Activated CD4-positive, alpha-beta memory T cell treated with anti-CD3 and anti-CD28 coated beads, Interleukin-2, amount 10 ng/mL, durations not matched to agents 7 days and 5 days (primary cell): ENCODE measurements at regions of chr9 and their contacts with region 1.

Region 1: DNA sequence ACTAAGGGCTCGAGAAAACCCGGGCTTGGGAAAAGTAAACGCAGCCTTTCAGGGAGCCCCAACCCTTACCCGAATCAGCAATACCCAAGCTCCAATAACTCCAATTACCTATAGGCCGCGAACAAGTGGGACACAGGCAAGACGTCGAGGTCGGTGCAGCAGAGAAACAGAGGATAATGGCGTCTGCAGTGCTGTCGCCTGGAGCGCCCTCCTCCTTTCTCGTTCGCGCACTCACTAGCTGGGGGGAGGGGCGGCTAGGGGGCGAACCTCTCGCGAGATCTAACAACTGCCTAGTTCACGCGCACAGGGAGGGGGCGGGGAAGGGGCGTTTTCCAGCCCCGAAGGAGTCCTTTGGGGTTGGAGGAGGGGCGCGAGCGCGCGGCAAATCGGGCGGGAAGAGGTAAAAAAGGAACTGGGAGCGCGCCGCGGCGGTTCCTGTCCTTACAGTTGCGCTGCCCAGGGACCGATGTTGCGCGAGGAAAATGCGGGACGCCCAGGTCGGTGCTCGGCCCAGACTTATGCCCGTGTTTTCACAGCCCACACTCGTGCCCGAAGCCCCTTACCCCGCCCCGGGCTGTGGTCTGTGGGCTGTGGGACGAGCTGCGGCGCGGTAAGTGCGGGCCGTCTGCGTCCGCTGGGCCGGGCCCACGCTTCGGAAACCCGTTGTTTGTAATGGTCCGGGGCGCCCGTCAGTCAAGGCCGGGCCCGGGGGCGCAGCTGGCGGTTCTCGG is at the start of gene RMI1:
- DNase-seq: peak; percentile 99
- H3K4me3 Mint-ChIP-seq: peak within 1 kb of the TSS; percentile 97
- H3K27ac Mint-ChIP-seq: peak within 1 kb of the TSS; percentile 96
- H3K4me1 Mint-ChIP-seq: peaks cover 51% of the 10 kb centered on the region
- H3K27me3 Mint-ChIP-seq: no peaks in the 10 kb centered on the region
- total RNA-seq, gene RMI1: 22.1 to 22.4 TPM

Region 2: DNA sequence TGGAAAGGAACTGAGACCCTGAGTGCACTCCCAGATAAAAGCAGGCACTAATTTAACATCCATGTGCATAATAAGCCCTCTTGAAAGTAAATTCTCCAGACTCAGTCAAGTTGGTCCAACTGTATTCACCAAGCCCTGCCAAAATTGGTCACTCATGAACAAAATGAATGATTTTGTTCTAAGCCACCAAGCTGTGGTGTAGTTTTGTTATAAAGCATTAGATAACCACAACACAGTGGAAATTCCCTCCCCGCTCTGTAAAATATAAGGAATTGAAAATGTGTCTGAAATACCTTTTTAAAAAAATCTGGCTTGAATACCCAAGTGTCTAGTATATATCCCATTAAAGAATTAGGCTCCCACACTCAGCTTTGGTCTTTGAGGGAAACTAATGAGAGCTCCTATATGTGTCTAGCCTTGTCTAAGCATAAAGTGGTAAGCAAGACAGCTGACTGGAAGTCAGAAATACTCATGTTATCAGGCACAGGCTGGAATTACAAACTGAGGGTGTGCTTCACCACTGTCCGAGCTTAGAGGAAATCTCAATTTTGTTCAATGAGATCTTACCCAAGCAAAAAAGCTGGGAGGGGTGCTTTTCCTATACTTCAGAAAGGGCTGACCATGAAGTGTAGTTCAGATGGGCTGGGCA is 324.4 kb before region 1 on chr9:
- CTCF ChIA-PET with region 1: no interaction called
- POLR2A ChIA-PET with region 1: no interaction called
- DNase-seq: no peak
- H3K4me3 Mint-ChIP-seq: no peak overlapping the region
- H3K27ac Mint-ChIP-seq: no peak overlapping the region
- H3K4me1 Mint-ChIP-seq: peaks cover 8% of the 10 kb centered on the region
- H3K27me3 Mint-ChIP-seq: no peaks in the 10 kb centered on the region

Region 3: DNA sequence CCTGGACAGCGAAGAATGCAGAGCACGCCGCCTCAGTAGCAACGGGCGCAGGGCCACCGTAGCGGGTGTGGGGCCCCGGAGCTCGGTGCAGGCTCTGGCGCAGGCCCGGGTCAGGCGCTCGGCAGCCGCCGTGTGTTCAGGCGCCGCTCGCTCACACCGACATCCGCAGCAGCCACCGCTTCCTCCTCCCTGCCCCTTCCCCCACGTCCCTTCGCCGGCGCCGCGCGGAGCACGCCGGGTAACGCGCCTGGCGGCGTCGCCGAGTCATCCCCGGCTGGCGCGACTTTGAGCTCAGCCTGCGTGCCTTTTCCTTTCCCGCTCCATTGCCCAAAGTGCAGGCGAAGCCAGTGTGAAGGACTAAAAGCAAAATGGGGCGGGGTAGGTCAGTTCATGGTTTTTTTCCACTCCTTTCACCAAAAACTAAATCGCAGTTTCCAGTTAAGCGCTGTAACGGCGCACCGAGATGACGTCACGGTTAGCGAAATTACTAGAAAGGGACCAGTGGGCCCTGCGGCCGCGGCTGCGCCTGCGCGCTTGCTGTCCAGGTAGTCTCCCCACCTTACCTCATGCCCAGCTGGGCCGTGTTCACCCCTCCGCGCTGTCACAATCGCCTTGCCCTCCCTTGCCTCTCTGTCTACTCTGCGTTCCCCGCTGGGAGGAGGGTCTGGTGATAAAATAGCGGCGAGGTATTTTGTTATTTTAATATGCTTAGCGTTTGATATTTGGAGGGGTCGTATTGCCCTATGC is 272.6 kb before region 1 on chr9 and contains the start of gene UBQLN1:
- CTCF ChIA-PET with region 1: no interaction called
- POLR2A ChIA-PET with region 1: interaction called, 49 read pairs
- DNase-seq: peak; percentile 92
- H3K4me3 Mint-ChIP-seq: peak within 1 kb of the TSS; percentile 85
- H3K27ac Mint-ChIP-seq: peak within 1 kb of the TSS; percentile 98
- H3K4me1 Mint-ChIP-seq: peaks cover 36% of the 10 kb centered on the region
- H3K27me3 Mint-ChIP-seq: no peaks in the 10 kb centered on the region
- total RNA-seq, gene UBQLN1: 109 to 112 TPM

Region 4: DNA sequence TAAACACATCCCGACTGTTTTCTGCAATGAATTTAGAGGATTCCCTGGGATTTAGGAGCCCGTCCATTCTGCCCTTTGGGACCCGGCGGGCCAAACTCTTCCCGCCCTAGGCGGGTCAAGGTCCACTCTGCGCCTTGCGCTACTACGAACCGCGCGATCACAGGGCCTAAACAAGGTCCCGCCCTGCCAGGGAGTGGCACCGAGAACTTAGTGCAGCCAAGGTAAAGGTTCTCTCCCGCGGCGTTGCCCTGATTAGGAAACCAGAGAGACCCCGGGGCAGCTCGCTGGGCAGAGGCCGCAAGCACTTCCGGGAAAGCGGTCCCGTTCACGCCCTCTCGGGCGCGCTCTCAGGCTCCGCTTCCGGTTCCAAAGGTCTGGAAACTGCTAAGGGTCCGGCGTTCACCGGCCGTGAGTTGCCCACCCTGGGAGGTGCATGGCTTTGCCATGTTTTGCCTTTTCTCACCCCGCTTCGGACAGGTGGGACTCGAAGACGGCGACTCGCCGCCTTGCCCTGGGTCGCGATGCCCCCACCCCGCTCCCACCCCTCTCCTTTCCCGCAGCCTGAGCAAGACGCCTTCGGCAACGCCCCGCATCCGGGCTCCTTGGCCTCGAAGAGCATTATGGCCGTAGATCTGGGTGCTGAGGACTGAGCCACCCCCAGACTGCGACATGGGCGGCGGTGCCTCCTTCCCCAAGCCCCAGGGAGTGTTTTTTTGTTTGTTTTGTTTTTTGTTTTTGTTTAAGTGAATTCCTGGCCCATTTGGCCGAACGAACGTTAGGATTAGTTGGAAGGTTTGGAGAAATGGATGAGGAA is 23.9 kb before region 1 on chr9:
- CTCF ChIA-PET with region 1: interaction called, 3 read pairs
- POLR2A ChIA-PET with region 1: interaction called, 64 read pairs
- DNase-seq: peak; percentile 74
- H3K4me3 Mint-ChIP-seq: peak overlapping the region; percentile 93
- H3K27ac Mint-ChIP-seq: peak overlapping the region; percentile 86
- H3K4me1 Mint-ChIP-seq: peaks cover 22% of the 10 kb centered on the region
- H3K27me3 Mint-ChIP-seq: no peaks in the 10 kb centered on the region

Region 5: DNA sequence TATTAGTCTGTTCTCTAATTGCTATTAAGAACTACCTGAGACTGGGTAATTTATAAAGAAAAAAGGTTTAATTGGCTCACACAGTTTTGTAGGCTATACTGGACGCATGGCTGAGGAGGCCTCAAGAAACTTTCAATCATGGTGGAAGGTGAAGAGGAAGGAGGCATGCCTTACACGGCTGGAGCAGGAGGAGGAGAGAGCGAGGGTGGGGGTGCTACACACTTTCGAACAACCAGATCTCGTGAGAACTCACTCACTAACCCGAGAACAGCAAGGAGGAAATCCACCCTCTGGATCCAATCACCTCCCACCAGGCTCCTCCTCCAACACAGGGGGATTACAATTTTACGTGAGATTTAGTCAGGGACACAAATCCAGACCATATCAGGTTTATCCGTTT is 90.0 kb after region 1 on chr9:
- CTCF ChIA-PET with region 1: no interaction called
- POLR2A ChIA-PET with region 1: no interaction called
- DNase-seq: no peak
- H3K4me3 Mint-ChIP-seq: no peak overlapping the region
- H3K27ac Mint-ChIP-seq: no peak overlapping the region
- H3K4me1 Mint-ChIP-seq: no peaks in the 10 kb centered on the region
- H3K27me3 Mint-ChIP-seq: peaks cover 2% of the 10 kb centered on the region

Region 6: GRCh38 chr9:84107995-84108394 is 127.4 kb after region 1 on chr9:
- CTCF ChIA-PET with region 1: interaction called, 3 read pairs
- POLR2A ChIA-PET with region 1: interaction called, 10 read pairs
- DNase-seq: no peak
- H3K4me3 Mint-ChIP-seq: no peak overlapping the region
- H3K27ac Mint-ChIP-seq: peak overlapping the region; percentile 77
- H3K4me1 Mint-ChIP-seq: peaks cover 45% of the 10 kb centered on the region
- H3K27me3 Mint-ChIP-seq: peaks cover 38% of the 10 kb centered on the region